ENCODE measurements at regions of chr1 and their contacts with region 1.

Region 1: GRCh38 chr1:212699104-212699624 is 476 bp downstream of the BATF3 start:
- DNase-seq: peak in 1 of 2 donors; percentile 70
- H3K4me3 ChIP-seq: peak overlapping the region; percentile 63 to 69
- H3K27ac ChIP-seq: peak overlapping the region; percentile 81
- H3K4me1 ChIP-seq: peaks cover 21% of the 10 kb centered on the region
- H3K27me3 ChIP-seq: no peaks in the 10 kb centered on the region
- CTCF ChIP-seq: no peak
- POLR2A ChIP-seq: no peak

Region 2: GRCh38 chr1:212712451-212713303 is 13.5 kb after region 1 on chr1:
- intact Hi-C with region 1: loop called (anchors 1 kb)
- DNase-seq: no peak
- H3K4me3 ChIP-seq: no peak overlapping the region
- H3K27ac ChIP-seq: no peak overlapping the region
- H3K4me1 ChIP-seq: no peaks in the 10 kb centered on the region
- H3K27me3 ChIP-seq: no peaks in the 10 kb centered on the region
- CTCF ChIP-seq: no peak
- POLR2A ChIP-seq: no peak

Region 3: GRCh38 chr1:212827824-212828278 is 128.7 kb after region 1 on chr1:
- intact Hi-C with region 1: no loop called
- DNase-seq: no peak
- H3K4me3 ChIP-seq: no peak overlapping the region
- H3K27ac ChIP-seq: no peak overlapping the region
- H3K4me1 ChIP-seq: no peaks in the 10 kb centered on the region
- H3K27me3 ChIP-seq: no peaks in the 10 kb centered on the region
- CTCF ChIP-seq: no peak
- POLR2A ChIP-seq: no peak

Measured in vagina (tissue), 2 donors.